Activated CD8-positive, alpha-beta T cell treated with anti-CD3 and anti-CD28 coated beads for 36 hours (primary cell): ENCODE measurements at regions of chr2 and their contacts with region 1.

Region 1: GRCh38 chr2:8488001-8488738 is 193.7 kb upstream of the ID2 start:
- DNase-seq: peak; percentile 89
- ATAC-seq: peak; percentile 84
- H3K4me3 Mint-ChIP-seq: peak overlapping the region; percentile 66
- H3K27ac Mint-ChIP-seq: peak overlapping the region; percentile 79
- H3K4me1 Mint-ChIP-seq: peaks cover 47% of the 10 kb centered on the region
- H3K27me3 Mint-ChIP-seq: peaks cover 6% of the 10 kb centered on the region
- CTCF ChIP-seq: no peak

Region 2: GRCh38 chr2:8303322-8303832 is 184.8 kb before region 1 on chr2:
- CTCF ChIA-PET with region 1: no interaction called
- POLR2A ChIA-PET with region 1: no interaction called
- intact Hi-C with region 1: loop called (anchors 10 kb)
- DNase-seq: peak; percentile 93
- ATAC-seq: peak; percentile 76
- H3K4me3 Mint-ChIP-seq: peak overlapping the region; percentile 31
- H3K27ac Mint-ChIP-seq: peak overlapping the region; percentile 87
- H3K4me1 Mint-ChIP-seq: peaks cover 67% of the 10 kb centered on the region
- H3K27me3 Mint-ChIP-seq: peaks cover 5% of the 10 kb centered on the region
- CTCF ChIP-seq: no peak